Activated B cell treated with CpG ODN at 0.5 μM for 24 hours (primary cell): ENCODE measurements at regions of chr10 and their contacts with region 1.

Region 1: GRCh38 chr10:73874267-73875138 is at the start of gene CAMK2G:
- DNase-seq: peak; percentile 74
- ATAC-seq: peak; percentile 90
- H3K4me3 Mint-ChIP-seq: peak within 1 kb of the TSS; percentile 95
- H3K27ac Mint-ChIP-seq: peak within 1 kb of the TSS; percentile 90
- H3K4me1 Mint-ChIP-seq: peaks cover 37% of the 10 kb centered on the region
- H3K27me3 Mint-ChIP-seq: no peaks in the 10 kb centered on the region
- CTCF ChIP-seq: no peak
- total RNA-seq, gene CAMK2G: 17.8 and 19.9 TPM in 2 replicates

Region 2: DNA sequence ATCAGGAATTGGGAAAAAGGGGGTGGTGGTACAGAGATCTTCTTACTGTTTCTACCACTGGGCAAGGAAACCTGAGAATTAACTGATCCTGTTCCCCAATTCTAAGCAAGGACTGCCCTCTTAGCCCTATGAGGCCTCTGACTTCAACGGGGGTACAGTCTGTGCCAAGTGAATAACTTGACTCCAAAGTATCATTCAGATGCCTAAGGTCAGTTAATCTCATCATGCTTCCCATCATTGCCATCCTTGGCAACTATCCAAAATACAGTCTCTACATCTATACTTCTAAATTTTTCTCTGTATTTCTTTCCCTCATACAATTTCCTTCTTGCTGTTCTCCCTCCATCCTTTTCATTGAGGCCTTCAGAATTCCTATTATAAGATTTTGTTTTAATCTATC is 389.2 kb before region 1 on chr10:
- CTCF ChIA-PET with region 1: no interaction called
- POLR2A ChIA-PET with region 1: interaction called, 13 read pairs
- intact Hi-C with region 1: no loop called
- DNase-seq: no peak
- ATAC-seq: no peak
- H3K4me3 Mint-ChIP-seq: no peak overlapping the region
- H3K27ac Mint-ChIP-seq: no peak overlapping the region
- H3K4me1 Mint-ChIP-seq: peaks cover 16% of the 10 kb centered on the region
- H3K27me3 Mint-ChIP-seq: no peaks in the 10 kb centered on the region
- CTCF ChIP-seq: no peak

Region 3: GRCh38 chr10:73785221-73785720 is 89.2 kb before region 1 on chr10 and contains the start of gene ZSWIM8:
- CTCF ChIA-PET with region 1: interaction called, 4 read pairs
- POLR2A ChIA-PET with region 1: interaction called, 5 read pairs
- intact Hi-C with region 1: loop called (anchors 1 kb)
- DNase-seq: peak; percentile 78
- ATAC-seq: peak; percentile 88
- H3K4me3 Mint-ChIP-seq: peak within 1 kb of the TSS; percentile 99
- H3K27ac Mint-ChIP-seq: peak within 1 kb of the TSS; percentile 98
- H3K4me1 Mint-ChIP-seq: peaks cover 57% of the 10 kb centered on the region
- H3K27me3 Mint-ChIP-seq: no peaks in the 10 kb centered on the region
- CTCF ChIP-seq: no peak
- total RNA-seq, gene ZSWIM8: 67.5 and 93.0 TPM in 2 replicates